Heart right ventricle (tissue), 16 donors: ENCODE measurements at regions of chr3 and their contacts with region 1.

Region 1: DNA sequence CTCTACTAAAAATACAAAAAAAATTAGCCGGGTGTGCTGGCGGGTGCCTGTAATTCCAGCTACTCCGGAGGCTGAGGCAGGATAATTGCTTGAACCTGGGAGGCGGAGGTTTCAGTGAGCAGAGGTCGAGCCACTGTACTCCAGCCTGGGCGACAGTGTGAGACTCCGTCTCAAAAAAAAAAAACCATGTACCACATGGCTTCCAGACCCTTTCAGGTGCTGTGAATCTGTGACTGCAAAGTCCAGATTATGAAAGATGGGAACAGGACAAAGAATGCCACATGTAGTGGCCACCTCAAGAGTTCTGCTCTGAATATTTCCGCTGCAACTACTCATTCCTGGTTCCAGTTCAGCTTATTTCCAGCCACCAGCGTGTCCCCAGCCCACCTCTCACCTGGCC is 8.4 kb upstream of the DCAF1 start:
- DNase-seq: no peak
- ATAC-seq: no peak
- H3K4me3 ChIP-seq: no peak overlapping the region
- H3K27ac ChIP-seq: no peak overlapping the region
- H3K4me1 ChIP-seq: no peaks in the 10 kb centered on the region
- H3K27me3 ChIP-seq: peaks cover 0 to 4% (median 0%) of the 10 kb centered on the region in 7 donors
- CTCF ChIP-seq: no peak

Region 2: GRCh38 chr3:51176923-51177322 is 331.3 kb before region 1 on chr3:
- intact Hi-C with region 1: no loop called
- DNase-seq: no peak
- ATAC-seq: no peak
- H3K4me3 ChIP-seq: no peak overlapping the region
- H3K27ac ChIP-seq: no peak overlapping the region
- H3K4me1 ChIP-seq: no peaks in the 10 kb centered on the region
- H3K27me3 ChIP-seq: no peaks in the 10 kb centered on the region
- CTCF ChIP-seq: no peak

Region 3: GRCh38 chr3:51662456-51662855 is 154.2 kb after region 1 on chr3:
- intact Hi-C with region 1: loop called in 2 of 10 experiments (anchors 5 kb)
- DNase-seq: no peak
- ATAC-seq: no peak
- H3K4me3 ChIP-seq: no peak overlapping the region
- H3K27ac ChIP-seq: no peak overlapping the region
- H3K4me1 ChIP-seq: peaks cover 0 to 8% (median 0%) of the 10 kb centered on the region in 9 donors
- H3K27me3 ChIP-seq: no peaks in the 10 kb centered on the region
- CTCF ChIP-seq: no peak